ENCODE measurements at regions of chrX and their contacts with region 1.

Region 1: DNA sequence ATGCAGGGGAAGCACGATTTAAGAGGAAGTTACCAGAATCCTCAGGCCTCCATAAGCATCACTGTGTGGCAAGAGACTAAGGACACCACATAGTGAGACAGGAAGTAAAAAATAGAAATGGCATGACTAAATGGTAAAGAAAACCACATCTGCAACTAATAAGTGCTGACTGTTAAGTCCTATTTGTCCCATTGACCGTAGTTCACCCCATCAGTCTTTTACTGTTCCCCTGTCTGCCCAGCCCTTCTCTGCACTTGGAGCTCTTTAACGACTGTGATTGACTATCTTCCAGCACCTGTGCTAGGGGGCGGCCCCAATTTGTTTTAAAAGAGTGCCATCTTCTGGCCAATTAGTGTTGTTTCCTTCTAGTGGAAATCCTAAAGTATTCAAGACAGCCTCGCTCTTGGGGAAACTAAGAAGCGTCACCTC is 94.2 kb downstream of the MAOA start:
- DNase-seq: peak; percentile 41 to 55
- ATAC-seq: peak; percentile 85 to 92
- H3K4me3 ChIP-seq: no peak overlapping the region
- H3K27ac ChIP-seq: no peak overlapping the region
- H3K4me1 ChIP-seq: no peaks in the 10 kb centered on the region
- CTCF ChIP-seq: peak; percentile 63
- EP300 ChIP-seq: no peak
- POLR2A ChIP-seq: no peak
- RAD21 ChIP-seq: peak; percentile 84 to 85

Region 2: GRCh38 chrX:43557792-43558191 is 192.5 kb before region 1 on chrX:
- CTCF ChIA-PET with region 1: interaction called, 63 read pairs
- POLR2A ChIA-PET with region 1: no interaction called
- DNase-seq: peak; percentile 49 to 68
- ATAC-seq: peak in 1 of 2 experiments; percentile 63; a peak in 3 of 6 replicates
- H3K4me3 ChIP-seq: no peak overlapping the region
- H3K27ac ChIP-seq: no peak overlapping the region
- H3K4me1 ChIP-seq: no peaks in the 10 kb centered on the region
- CTCF ChIP-seq: peak; percentile 69
- EP300 ChIP-seq: no peak
- POLR2A ChIP-seq: no peak
- RAD21 ChIP-seq: peak; percentile 74 to 77

Region 3: GRCh38 chrX:43735957-43736356 is 14.3 kb before region 1 on chrX:
- CTCF ChIA-PET with region 1: interaction called, 12 read pairs
- POLR2A ChIA-PET with region 1: no interaction called
- DNase-seq: no peak
- ATAC-seq: no peak
- H3K4me3 ChIP-seq: no peak overlapping the region
- H3K27ac ChIP-seq: no peak overlapping the region
- H3K4me1 ChIP-seq: no peaks in the 10 kb centered on the region
- CTCF ChIP-seq: no peak
- EP300 ChIP-seq: no peak
- POLR2A ChIP-seq: no peak
- RAD21 ChIP-seq: no peak

Region 4: DNA sequence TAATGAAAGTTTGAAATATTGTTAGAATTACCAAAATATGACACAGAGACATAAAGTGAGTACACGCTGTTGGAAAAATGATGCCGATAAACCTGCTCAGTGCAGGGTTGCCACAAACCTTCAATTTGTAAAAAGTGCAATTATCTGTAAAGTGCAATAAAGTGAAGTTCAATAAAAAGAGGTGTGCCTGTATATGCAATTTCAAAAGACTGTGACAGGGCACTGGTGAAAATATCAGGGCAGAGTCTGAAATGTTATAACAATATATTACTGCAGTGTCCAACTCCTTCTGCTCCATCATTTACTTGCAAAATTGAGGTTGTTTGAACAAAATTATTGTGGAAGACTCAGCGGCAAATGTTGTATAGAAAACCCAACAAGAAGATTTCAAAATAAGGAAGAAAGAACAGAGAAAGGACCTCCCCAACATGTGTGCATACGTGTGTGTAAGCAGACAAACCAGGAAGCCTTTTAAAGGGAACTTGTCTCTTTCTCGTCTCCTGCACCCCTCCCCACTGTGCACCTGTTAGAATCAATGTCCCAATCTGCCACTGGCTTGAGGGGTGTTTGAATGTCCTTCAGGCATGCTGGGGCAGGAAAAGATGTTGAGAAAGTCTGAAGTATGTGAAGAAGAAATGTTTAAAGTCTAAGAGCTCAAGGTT is 35.8 kb after region 1 on chrX:
- CTCF ChIA-PET with region 1: no interaction called
- POLR2A ChIA-PET with region 1: no interaction called
- DNase-seq: no peak
- ATAC-seq: no peak
- H3K4me3 ChIP-seq: no peak overlapping the region
- H3K27ac ChIP-seq: no peak overlapping the region
- H3K4me1 ChIP-seq: no peaks in the 10 kb centered on the region
- CTCF ChIP-seq: no peak
- EP300 ChIP-seq: no peak
- POLR2A ChIP-seq: no peak
- RAD21 ChIP-seq: no peak